Calu3 (cell line): ENCODE measurements at regions of chr3 and their contacts with region 1.

Region 1: DNA sequence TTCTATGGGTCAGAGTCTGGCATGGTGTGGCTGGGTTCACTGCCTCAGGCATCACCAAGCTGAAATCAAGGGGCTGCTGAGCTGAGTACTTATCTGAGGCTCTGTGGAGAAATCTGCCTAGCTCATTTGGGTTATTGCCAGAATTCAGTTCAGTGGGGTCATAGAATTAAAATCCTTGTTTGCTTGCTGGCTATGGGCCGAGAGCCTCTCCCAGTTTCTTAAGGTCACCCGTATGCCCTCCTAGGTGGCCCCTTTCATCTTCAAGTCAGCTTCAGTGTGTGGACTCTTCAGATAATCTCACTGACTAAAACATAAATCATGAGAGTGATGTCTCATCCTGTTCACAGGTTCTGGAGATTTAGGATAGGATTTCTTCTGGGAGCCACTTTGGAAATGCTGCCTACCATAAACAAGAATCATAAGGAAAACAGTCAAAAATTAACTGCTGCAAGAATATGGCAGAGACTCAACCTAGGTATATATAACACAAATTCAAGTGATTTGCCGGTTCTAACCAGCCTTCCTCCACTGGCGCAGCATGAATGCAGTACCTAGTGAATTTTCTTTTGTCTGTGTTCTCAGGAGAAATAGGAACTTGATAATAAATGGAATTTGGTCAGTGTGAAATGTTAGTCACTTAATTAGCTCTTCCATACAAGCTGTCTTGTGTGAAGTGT is 5.3 kb downstream of the CP start:
- DNase-seq: peak; percentile 35
- H3K4me3 Mint-ChIP-seq: no peak overlapping the region
- H3K27ac Mint-ChIP-seq: no peak overlapping the region
- H3K4me1 Mint-ChIP-seq: peaks cover 46% of the 10 kb centered on the region
- H3K27me3 Mint-ChIP-seq: no peaks in the 10 kb centered on the region
- CTCF ChIP-seq: no peak

Region 2: DNA sequence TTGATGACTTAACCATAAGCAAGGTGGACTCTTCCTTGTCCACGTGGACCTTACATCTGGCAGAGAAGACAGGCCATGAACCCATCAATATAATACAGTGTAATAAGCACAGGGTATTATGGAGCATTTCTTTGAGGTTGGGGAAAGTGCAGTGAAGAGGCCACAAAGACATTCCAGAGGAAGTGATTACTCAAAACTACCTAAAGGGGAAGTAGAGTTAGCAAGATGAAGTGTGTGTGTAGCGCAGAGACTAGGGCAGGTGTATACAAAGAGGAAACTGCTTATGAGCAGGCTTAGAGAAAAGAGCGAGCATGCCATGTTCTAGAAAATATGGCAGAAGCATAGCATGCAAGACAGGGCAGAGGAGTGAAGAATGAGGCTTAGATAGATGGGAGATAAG is 12.6 kb before region 1 on chr3:
- CTCF ChIA-PET with region 1: interaction called, 4 read pairs
- intact Hi-C with region 1: loop called (anchors 1 kb)
- DNase-seq: no peak
- H3K4me3 Mint-ChIP-seq: no peak overlapping the region
- H3K27ac Mint-ChIP-seq: no peak overlapping the region
- H3K4me1 Mint-ChIP-seq: peaks cover 32% of the 10 kb centered on the region
- H3K27me3 Mint-ChIP-seq: no peaks in the 10 kb centered on the region
- CTCF ChIP-seq: no peak